GM13977 (cell line): ENCODE measurements at regions of chr10 and their contacts with region 1.

Region 1: DNA sequence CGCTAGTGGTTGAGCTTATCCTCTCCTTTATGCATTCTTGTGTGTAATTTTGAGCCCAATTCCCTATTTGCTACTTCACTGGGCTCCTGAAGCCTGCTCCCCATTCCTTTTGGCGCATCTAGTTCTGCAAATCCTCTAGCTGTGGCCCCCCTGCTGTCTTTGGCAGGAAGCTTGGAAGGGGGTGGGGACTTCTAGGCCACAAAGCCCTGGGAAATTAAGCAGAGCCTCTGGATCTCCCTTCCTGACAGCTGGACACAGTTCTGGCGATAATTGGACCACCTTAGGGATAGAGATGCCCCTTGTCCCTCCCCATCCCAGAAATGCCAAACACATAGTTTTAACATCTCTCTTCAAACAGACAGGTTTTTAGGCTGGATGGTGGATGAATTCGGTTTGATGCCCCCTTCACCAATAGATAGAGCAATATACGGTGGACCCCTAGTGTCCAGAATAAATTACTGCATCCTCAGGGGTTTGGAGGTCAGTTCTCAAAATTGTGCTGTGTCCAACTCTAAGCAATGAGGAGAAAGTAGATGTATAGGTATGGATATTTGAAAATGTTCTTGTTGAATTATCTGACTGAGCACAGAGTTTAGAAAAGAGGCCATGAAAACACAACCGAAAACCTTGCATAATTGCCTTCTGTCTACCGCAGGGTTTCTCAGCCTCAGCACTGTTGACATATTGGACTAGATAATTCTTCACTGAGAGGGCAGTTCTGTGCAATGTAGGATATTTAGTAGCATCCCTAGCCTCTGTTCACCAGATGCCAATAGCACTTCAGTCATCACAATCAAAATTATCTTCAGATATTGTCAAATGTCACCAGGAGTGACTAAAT is 75.5 kb downstream of the PAPSS2 start:
- DNase-seq: peak; percentile 60
- CTCF ChIP-seq: peak; percentile 74

Region 2: GRCh38 chr10:86846088-86846487 is 889.1 kb before region 1 on chr10:
- in situ Hi-C with region 1: no loop called
- DNase-seq: no peak
- CTCF ChIP-seq: no peak

Region 3: GRCh38 chr10:87504640-87505365 is 230.4 kb before region 1 on chr10 and contains the start of gene MINPP1:
- in situ Hi-C with region 1: no loop called
- DNase-seq: peak; percentile 88
- CTCF ChIP-seq: no peak

Region 4: GRCh38 chr10:87531908-87532622 is 203.1 kb before region 1 on chr10:
- in situ Hi-C with region 1: loop called (anchors 10 kb)
- DNase-seq: no peak
- CTCF ChIP-seq: no peak

Region 5: DNA sequence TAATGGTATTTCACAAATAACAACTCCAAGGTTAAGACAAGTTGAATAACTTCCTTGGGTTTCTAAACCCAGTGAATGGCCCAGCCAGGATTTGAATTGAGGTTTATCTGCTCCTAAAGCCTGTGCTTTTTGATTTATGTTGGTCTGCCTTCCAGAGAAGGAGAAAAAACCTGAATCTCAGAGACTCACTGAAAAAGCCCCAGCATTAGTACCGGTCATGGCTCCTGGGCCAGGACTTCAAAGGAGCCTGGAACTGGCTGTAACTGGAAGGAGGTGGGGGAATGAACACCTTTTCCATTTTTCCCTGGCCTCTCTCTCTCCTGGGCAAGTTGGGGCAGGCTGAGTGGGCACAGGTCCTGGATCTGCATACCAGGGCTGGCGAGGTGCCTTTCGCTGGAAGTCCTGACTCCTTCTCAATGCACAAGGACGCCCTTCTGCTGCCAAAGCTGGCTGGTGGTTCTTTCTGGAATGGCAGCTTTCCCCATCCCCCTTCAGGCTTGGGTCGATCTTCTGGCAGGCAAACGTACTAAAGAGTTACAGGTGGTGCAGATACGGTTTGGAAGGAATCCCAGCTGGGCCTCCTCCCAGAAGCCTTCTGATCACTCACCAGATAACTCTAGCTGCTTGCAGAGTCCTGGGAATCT is 396.4 kb after region 1 on chr10:
- in situ Hi-C with region 1: no loop called
- DNase-seq: no peak
- CTCF ChIP-seq: no peak

Region 6: GRCh38 chr10:88232029-88232895 is 497.1 kb after region 1 on chr10:
- in situ Hi-C with region 1: no loop called
- DNase-seq: no peak
- CTCF ChIP-seq: no peak